ENCODE measurements at regions of chr5 and their contacts with region 1.

Region 1: GRCh38 chr5:178551059-178551458 is 39.1 kb downstream of the COL23A1 start:
- DNase-seq: no peak
- H3K4me3 ChIP-seq: no peak overlapping the region
- H3K27ac ChIP-seq: no peak overlapping the region
- H3K4me1 ChIP-seq: peaks cover 0 to 9% (median 0%) of the 10 kb centered on the region in 4 donors
- H3K27me3 ChIP-seq: peaks cover 0 to 3% (median 0%) of the 10 kb centered on the region in 4 donors
- CTCF ChIP-seq: peak; percentile 46 to 58 (median 51)
- EP300 ChIP-seq: no peak
- POLR2A ChIP-seq: no peak

Region 2: DNA sequence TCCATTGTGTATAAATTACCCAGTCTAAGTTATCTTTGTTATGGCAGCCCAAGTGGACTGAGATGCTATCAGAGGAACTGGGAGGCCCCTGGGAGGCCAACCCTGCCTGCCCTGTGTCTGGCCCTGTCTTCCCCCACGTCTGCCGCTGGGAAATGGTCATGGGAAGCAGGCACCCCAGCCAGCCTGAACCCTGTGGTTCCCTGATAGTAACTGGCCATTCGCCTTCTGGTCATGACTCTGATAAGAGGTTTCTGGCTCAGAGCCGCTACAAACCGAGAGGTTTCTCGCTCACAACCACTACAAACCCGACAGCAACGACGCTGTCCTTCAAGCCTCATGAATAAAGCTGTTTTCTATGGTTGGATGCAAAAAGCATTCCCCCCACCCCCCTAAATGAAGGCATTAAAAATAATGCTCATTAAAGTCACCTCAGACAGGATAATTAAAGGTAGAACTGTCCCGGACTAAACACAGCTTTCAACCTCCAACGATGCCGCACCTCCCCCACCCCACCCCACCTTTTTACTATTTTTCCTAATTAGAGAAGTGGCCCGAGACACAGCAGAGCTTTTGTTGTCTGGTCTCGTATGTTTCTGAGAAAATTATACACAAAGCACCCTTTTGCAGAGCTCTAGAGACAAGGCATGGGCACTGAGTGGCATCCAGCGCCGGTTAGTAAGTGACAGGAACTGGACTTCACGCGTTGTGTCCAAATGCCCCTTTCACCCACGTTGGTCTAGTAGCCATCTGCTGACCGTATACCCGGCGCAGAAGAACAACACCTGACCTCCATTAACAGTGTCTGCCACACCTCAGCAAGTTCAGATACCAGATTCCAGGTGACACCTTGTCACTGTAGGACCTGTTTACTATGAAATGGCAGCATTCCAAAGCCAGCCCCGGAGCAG is 101.6 kb before region 1 on chr5:
- intact Hi-C with region 1: no loop called
- DNase-seq: no peak
- H3K4me3 ChIP-seq: no peak overlapping the region
- H3K27ac ChIP-seq: no peak overlapping the region
- H3K4me1 ChIP-seq: no peaks in the 10 kb centered on the region
- H3K27me3 ChIP-seq: no peaks in the 10 kb centered on the region
- CTCF ChIP-seq: no peak
- EP300 ChIP-seq: no peak
- POLR2A ChIP-seq: no peak

Region 3: DNA sequence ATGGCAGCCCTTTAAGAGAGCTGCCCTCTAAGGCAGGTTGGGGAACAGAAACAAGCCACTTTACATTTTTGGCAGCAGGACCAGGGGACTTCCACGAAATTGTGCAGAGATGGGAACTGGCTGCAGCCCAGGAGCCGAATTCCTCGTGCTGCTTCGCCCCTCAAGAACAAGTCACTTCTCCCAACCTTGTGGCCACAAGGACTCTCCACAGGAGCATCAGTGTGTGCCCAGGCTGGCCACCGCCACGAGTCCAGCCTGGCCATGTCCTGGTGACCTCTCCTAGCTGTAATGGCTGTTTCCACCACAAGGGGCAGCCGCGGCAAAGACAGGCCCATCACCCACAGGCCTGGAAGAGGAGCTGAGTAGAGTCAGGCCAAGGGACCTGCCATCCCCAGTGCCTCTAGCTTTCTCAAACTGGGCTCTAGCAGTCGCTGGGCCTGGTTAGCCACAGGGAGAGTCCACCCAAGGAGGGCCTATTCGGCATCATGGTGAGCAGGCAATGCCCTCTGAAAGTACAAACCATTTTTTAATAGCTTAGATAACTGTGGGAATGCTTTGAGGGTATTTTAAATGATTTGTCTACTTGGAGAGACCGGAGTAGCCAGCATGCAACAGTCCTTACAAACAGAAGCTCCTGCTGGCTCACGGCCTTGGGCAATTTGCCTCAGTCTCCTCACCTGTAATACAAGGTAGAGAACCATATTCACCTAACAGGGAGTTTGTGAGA is 89.9 kb before region 1 on chr5:
- intact Hi-C with region 1: loop called (anchors 2 kb)
- DNase-seq: no peak
- H3K4me3 ChIP-seq: no peak overlapping the region
- H3K27ac ChIP-seq: no peak overlapping the region
- H3K4me1 ChIP-seq: peaks cover 4 to 12% (median 8%) of the 10 kb centered on the region in 4 donors
- H3K27me3 ChIP-seq: no peaks in the 10 kb centered on the region
- CTCF ChIP-seq: peak; percentile 68 to 84 (median 75)
- EP300 ChIP-seq: no peak
- POLR2A ChIP-seq: no peak

Region 4: GRCh38 chr5:178564397-178564796 is 13.3 kb after region 1 on chr5:
- intact Hi-C with region 1: no loop called
- DNase-seq: no peak
- H3K4me3 ChIP-seq: no peak overlapping the region
- H3K27ac ChIP-seq: no peak overlapping the region
- H3K4me1 ChIP-seq: no peaks in the 10 kb centered on the region
- H3K27me3 ChIP-seq: no peaks in the 10 kb centered on the region
- CTCF ChIP-seq: no peak
- EP300 ChIP-seq: no peak
- POLR2A ChIP-seq: no peak